K562 (cell line): ENCODE measurements at regions of chr11 and their contacts with region 1.

Region 1: DNA sequence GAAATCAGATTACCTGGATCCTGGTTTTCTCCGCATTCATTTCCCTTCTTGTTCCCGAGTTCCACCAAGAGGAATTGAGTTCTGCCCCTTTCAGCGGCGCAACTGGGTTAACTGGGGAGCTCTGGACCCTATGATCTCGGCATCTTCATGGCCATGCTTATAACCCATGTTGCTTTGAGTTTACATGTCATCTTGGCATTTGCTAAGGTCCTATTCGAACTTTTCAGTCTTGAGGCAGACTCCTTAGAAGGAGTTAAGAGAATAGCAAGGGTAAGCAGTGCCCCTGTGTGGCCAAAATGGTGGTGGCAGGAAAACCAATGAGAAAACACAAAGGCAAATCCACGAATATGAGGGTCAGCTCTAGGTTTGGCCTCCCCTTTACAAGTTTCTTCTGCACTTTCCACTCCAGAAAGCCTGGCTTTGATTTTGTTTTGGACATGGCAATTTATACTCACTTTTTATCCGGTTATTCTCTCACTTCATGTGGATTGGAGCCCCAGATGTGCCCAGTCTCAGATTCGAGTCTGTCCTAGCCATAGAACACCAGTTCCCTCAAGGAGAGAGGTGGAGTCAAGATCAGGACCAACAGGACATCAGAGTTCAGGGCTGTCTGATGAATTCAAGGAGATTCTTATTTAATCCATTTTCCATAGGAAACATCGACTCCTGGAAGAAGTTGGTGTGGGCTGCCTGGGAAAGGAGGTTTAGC is 55.3 kb upstream of the FBXO3 start:
- DNase-seq: peak; percentile 51 to 77 (median 64)
- ATAC-seq: peak; percentile 94
- H3K4me3 ChIP-seq: no peak overlapping the region
- H3K27ac ChIP-seq: no peak overlapping the region
- H3K4me1 ChIP-seq: peaks cover 0 to 9% of the 10 kb centered on the region in 2 experiments; a peak in 2 of 5 replicates
- H3K27me3 ChIP-seq: peaks cover 32 to 49% of the 10 kb centered on the region in 2 experiments
- CTCF ChIP-seq: peak; percentile 81 to 94 (median 86)
- EP300 ChIP-seq: no peak
- POLR2A ChIP-seq: no peak
- RAD21 ChIP-seq: peak; percentile 85 to 90

Region 2: GRCh38 chr11:33362051-33362910 is 467.3 kb before region 1 on chr11:
- CTCF ChIA-PET with region 1: no interaction called
- POLR2A ChIA-PET with region 1: no interaction called
- in situ Hi-C with region 1: loop called (anchors 10 kb)
- intact Hi-C with region 1: loop called (anchors 5 kb)
- DNase-seq: peak in 2 of 4 experiments; percentile 27 to 45
- ATAC-seq: peak; percentile 81
- H3K4me3 ChIP-seq: no peak overlapping the region
- H3K27ac ChIP-seq: no peak overlapping the region
- H3K4me1 ChIP-seq: no peaks in the 10 kb centered on the region
- H3K27me3 ChIP-seq: peaks cover 0 to 2% of the 10 kb centered on the region in 2 experiments; a peak in 3 of 5 replicates
- CTCF ChIP-seq: peak; percentile 30 to 73 (median 53); a peak in 5 of 6 replicates
- EP300 ChIP-seq: no peak
- POLR2A ChIP-seq: no peak
- RAD21 ChIP-seq: peak; percentile 62 to 73

Region 3: DNA sequence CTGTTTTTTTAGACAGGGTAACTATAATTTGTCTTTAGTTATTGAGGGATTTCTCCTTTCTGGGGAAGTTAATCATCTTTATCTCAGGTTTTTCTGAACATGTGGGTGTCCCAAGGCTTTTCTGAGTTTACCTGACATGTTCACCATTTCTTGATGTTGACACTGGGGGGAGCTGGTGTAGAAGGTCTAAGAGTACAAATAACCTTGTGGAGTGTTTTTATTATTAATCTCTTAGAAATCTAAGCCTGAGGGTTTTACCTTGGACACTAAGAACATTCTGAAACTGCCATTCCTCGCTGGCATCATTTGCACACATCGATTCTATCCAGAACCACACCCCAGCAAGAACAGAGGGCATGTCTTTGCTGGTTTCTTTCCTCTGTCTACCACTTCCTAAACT is 113.4 kb before region 1 on chr11:
- CTCF ChIA-PET with region 1: interaction called, 9 read pairs
- POLR2A ChIA-PET with region 1: no interaction called
- in situ Hi-C with region 1: no loop called
- intact Hi-C with region 1: loop called (anchors 1 kb)
- DNase-seq: peak in 3 of 4 experiments; percentile 24 to 59 (median 27)
- ATAC-seq: peak; percentile 79
- H3K4me3 ChIP-seq: no peak overlapping the region
- H3K27ac ChIP-seq: no peak overlapping the region
- H3K4me1 ChIP-seq: peaks cover 0 to 4% of the 10 kb centered on the region in 2 experiments; a peak in 3 of 5 replicates
- H3K27me3 ChIP-seq: no peaks in the 10 kb centered on the region
- CTCF ChIP-seq: peak; percentile 54 to 66 (median 55); a peak in 4 of 6 replicates
- EP300 ChIP-seq: no peak
- POLR2A ChIP-seq: no peak
- RAD21 ChIP-seq: peak; percentile 65 to 78

Region 4: DNA sequence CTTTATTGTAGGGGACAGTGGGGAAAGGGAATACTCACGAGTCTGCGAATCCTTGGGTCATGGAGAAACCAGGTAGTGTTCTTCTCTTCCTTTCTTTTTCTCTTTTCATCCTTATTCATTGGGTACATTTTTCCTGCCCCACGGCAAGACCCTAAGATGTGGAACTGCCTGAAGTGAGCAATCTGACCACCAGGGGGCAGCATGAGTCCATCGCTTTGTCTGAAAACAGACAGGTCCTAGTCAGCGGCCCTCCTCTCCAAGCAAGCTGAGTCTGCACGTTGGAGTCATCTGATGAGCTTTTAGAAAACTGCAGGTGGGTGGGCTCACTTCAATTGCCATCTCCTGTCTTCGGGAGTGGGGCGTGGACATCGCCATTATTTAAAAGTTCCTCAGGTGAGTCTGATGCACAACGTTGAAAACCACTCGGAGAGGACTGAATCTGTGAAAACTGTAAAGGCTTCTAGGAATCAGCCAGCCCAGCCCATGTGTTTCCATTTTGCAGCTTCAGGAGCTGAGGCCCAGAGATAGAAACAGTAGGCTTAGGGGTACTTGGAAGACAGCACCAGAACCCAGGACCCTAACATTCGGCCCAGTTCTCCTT is 21.3 kb before region 1 on chr11:
- CTCF ChIA-PET with region 1: interaction called, 13 read pairs
- POLR2A ChIA-PET with region 1: interaction called, 6 read pairs
- in situ Hi-C with region 1: no loop called
- intact Hi-C with region 1: loop called (anchors 1 kb)
- DNase-seq: peak; percentile 79 to 90 (median 80)
- ATAC-seq: peak; percentile 99
- H3K4me3 ChIP-seq: no peak overlapping the region
- H3K27ac ChIP-seq: no peak overlapping the region
- H3K4me1 ChIP-seq: no peaks in the 10 kb centered on the region
- H3K27me3 ChIP-seq: peaks cover 9% of the 10 kb centered on the region in 2 experiments; a peak in 4 of 5 replicates
- CTCF ChIP-seq: peak; percentile 82 to 92 (median 92)
- EP300 ChIP-seq: no peak
- POLR2A ChIP-seq: no peak
- RAD21 ChIP-seq: peak; percentile 77 to 87

Region 5: DNA sequence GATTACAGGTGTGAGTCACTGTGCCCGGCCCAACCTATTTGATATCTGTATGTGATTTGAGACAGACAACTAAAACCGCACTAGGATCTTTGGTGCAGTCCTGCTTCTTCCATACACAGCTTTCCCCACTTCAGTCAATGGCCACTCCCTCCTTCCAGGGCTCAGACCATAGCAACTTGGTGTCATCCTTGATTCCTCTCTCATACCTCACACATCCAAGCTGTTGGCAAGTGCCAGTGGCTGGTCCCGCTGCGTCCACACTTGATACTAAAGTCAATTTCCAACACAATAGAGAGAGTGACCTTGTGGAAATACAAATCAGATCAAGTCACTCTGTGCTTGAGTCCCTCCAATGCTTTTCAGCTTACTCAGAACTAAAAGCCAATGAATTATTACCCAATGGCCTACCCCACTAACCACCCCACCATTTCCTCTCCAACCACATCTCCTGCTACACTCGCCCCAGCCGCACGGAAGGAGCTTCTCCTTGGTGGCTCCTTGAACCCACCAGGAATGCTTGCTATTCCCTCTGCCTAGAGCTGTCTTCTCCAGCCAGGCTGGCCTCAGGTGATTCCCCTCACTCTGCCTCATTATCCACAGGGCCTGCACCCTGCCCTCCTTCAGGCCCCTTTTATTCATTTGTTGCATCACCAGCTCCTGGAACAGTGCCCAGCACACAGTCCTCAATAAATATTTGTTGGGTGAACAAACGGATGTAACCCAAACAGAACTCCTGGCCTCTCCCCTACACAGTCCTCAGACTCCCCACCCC is 515.4 kb after region 1 on chr11:
- CTCF ChIA-PET with region 1: no interaction called
- POLR2A ChIA-PET with region 1: no interaction called
- in situ Hi-C with region 1: loop called (anchors 25 kb)
- intact Hi-C with region 1: no loop called
- DNase-seq: no peak
- ATAC-seq: no peak; the same call in 2 of the 3 replicates
- H3K4me3 ChIP-seq: no peak overlapping the region
- H3K27ac ChIP-seq: no peak overlapping the region
- H3K4me1 ChIP-seq: no peaks in the 10 kb centered on the region
- H3K27me3 ChIP-seq: peaks cover 34 to 66% of the 10 kb centered on the region in 2 experiments
- CTCF ChIP-seq: no peak
- EP300 ChIP-seq: no peak
- POLR2A ChIP-seq: no peak
- RAD21 ChIP-seq: no peak